Psoas muscle (tissue), 8 donors: ENCODE measurements at regions of chr11 and their contacts with region 1.

Region 1: DNA sequence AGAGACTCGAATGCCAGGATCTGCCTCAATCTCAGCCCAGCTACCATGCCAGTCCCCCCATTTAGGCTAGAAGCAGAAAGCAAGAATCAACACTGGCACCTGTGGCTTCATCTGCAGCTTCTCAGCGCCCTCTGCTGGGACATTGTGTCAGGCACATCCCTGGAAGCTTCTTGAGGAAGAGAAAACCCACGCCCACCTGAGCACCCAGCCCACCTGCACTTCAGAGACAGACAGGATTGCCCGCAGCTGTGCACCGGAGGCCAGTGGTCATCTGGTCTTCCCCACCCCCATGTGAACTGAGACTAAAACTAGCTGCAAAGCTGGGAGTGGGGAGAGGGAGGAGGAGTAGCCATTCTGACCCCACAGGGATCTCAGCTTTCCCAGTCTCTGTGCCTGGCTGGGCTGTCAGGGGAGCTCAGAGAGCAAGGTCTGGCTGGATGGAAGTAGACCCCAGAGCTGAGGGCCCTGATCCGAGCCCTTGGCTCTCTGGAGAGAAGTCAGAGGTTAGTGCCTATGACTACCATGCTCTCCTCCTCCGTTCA is 66.8 kb downstream of the FEZ1 start:
- DNase-seq: peak; percentile 58 to 78
- ATAC-seq: peak in 2 of 4 donors; percentile 23 to 47
- H3K4me3 ChIP-seq: no peak overlapping the region
- H3K27ac ChIP-seq: no peak overlapping the region
- H3K4me1 ChIP-seq: peaks cover 46% of the 10 kb centered on the region
- H3K27me3 ChIP-seq: no peaks in the 10 kb centered on the region
- CTCF ChIP-seq: peak; percentile 61

Region 2: GRCh38 chr11:124961972-124962609 is 467.1 kb before region 1 on chr11:
- intact Hi-C with region 1: loop called (anchors 5 to 10 kb)
- DNase-seq: no peak
- ATAC-seq: peak; percentile 60 to 89 (median 78)
- H3K4me3 ChIP-seq: no peak overlapping the region
- H3K27ac ChIP-seq: no peak overlapping the region
- H3K4me1 ChIP-seq: no peaks in the 10 kb centered on the region
- H3K27me3 ChIP-seq: no peaks in the 10 kb centered on the region
- CTCF ChIP-seq: peak; percentile 70

Region 3: GRCh38 chr11:125091247-125091876 is 337.9 kb before region 1 on chr11:
- intact Hi-C with region 1: loop called in 1 of 2 experiments (anchors 5 kb)
- DNase-seq: no peak
- ATAC-seq: peak; percentile 73 to 80 (median 74)
- H3K4me3 ChIP-seq: no peak overlapping the region
- H3K27ac ChIP-seq: no peak overlapping the region
- H3K4me1 ChIP-seq: peaks cover 8% of the 10 kb centered on the region
- H3K27me3 ChIP-seq: no peaks in the 10 kb centered on the region
- CTCF ChIP-seq: peak; percentile 63

Region 4: DNA sequence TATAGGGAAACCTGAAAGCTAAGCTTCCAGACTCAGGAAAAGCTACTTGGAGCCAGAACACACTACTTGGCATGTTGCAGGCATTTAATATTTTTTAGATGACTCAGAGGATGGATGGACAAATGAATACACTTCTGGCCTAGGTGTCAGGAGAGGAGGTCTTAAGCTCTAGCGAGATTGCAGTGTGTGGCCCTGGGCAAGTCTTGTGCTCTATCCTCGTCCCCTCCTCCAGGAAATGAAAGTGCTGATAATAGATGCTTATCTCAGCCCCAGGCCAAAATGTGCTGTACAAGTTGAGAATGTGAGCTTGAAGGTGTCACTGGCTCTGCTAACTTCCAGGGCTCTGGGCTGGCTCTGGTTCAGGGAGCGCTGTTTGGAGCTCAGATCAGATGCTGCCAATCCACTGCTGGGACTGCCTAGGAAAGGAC is 128.4 kb before region 1 on chr11:
- intact Hi-C with region 1: no loop called
- DNase-seq: peak in 1 of 2 donors; percentile 75
- ATAC-seq: peak; percentile 67 to 84 (median 76)
- H3K4me3 ChIP-seq: no peak overlapping the region
- H3K27ac ChIP-seq: peak overlapping the region; percentile 61
- H3K4me1 ChIP-seq: peaks cover 31% of the 10 kb centered on the region
- H3K27me3 ChIP-seq: no peaks in the 10 kb centered on the region
- CTCF ChIP-seq: no peak

Region 5: GRCh38 chr11:125345421-125346178 is 83.6 kb before region 1 on chr11:
- intact Hi-C with region 1: loop called in 1 of 2 experiments (anchors 5 kb)
- DNase-seq: peak; percentile 84 to 93
- ATAC-seq: peak; percentile 86 to 93 (median 88)
- H3K4me3 ChIP-seq: peak overlapping the region; percentile 2
- H3K27ac ChIP-seq: peak overlapping the region; percentile 67
- H3K4me1 ChIP-seq: peaks cover 41% of the 10 kb centered on the region
- H3K27me3 ChIP-seq: no peaks in the 10 kb centered on the region
- CTCF ChIP-seq: peak; percentile 91

Region 6: GRCh38 chr11:125625630-125626287 is 196.5 kb after region 1 on chr11:
- intact Hi-C with region 1: no loop called
- DNase-seq: peak; percentile 86 to 93
- ATAC-seq: peak; percentile 92 to 97 (median 94)
- H3K4me3 ChIP-seq: peak overlapping the region; percentile 85
- H3K27ac ChIP-seq: peak overlapping the region; percentile 97
- H3K4me1 ChIP-seq: peaks cover 13% of the 10 kb centered on the region
- H3K27me3 ChIP-seq: no peaks in the 10 kb centered on the region
- CTCF ChIP-seq: no peak

Region 7: GRCh38 chr11:126062679-126063506 is 633.7 kb after region 1 on chr11 and contains the start of gene CDON:
- intact Hi-C with region 1: no loop called
- DNase-seq: peak; percentile 93 to 96
- ATAC-seq: peak; percentile 99
- H3K4me3 ChIP-seq: peak within 1 kb of the TSS; percentile 79
- H3K27ac ChIP-seq: peak within 1 kb of the TSS; percentile 80
- H3K4me1 ChIP-seq: peaks cover 12% of the 10 kb centered on the region
- H3K27me3 ChIP-seq: peaks cover 0 to 16% (median 0%) of the 10 kb centered on the region in 3 donors
- CTCF ChIP-seq: no peak
- total RNA-seq, gene CDON: 1.3 to 5.6 (median 1.5) TPM